Colonic mucosa (tissue), 4 donors: ENCODE measurements at regions of chr1 and their contacts with region 1.

Region 1: DNA sequence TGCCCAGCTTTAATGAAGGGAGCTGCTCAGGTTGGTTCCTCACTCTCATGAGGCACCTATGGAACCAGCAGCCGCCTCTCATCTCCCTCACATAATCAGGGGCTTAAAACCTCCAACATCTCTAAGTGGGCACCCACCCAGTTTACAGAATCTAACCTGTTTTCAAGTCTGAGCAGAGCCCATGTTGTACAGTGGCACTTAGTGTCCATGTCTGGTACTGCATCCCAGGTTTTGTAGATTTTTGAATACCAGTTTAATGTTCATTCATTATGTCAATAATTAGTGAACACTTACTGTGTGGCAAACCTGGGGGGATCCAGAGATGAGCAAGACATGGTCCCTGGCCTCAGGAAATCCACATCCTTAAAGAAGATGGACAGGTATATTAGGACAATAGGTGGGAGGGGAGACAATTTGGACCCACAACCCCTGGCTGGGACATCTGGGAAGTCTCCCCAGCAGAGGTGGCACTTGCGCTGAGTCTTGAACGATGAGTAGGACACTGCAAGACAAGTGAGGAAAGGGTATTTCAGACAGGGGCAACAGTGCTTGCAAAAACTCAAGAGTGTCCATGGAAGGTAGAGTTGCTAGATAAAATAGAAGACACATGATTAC is 83.3 kb downstream of the LACTBL1 start:
- DNase-seq: no peak
- H3K4me3 ChIP-seq: no peak overlapping the region
- H3K27ac ChIP-seq: no peak overlapping the region
- H3K4me1 ChIP-seq: no peaks in the 10 kb centered on the region
- H3K27me3 ChIP-seq: no peaks in the 10 kb centered on the region
- CTCF ChIP-seq: peak; percentile 70

Region 2: GRCh38 chr1:22704440-22705067 is 184.8 kb before region 1 on chr1:
- intact Hi-C with region 1: loop called (anchors 2 kb)
- DNase-seq: peak; percentile 94
- H3K4me3 ChIP-seq: no peak overlapping the region
- H3K27ac ChIP-seq: no peak overlapping the region
- H3K4me1 ChIP-seq: peaks cover 5% of the 10 kb centered on the region
- H3K27me3 ChIP-seq: no peaks in the 10 kb centered on the region
- CTCF ChIP-seq: peak; percentile 87